T-cell (primary cell): ENCODE measurements at regions of chr2 and their contacts with region 1.

Region 1: DNA sequence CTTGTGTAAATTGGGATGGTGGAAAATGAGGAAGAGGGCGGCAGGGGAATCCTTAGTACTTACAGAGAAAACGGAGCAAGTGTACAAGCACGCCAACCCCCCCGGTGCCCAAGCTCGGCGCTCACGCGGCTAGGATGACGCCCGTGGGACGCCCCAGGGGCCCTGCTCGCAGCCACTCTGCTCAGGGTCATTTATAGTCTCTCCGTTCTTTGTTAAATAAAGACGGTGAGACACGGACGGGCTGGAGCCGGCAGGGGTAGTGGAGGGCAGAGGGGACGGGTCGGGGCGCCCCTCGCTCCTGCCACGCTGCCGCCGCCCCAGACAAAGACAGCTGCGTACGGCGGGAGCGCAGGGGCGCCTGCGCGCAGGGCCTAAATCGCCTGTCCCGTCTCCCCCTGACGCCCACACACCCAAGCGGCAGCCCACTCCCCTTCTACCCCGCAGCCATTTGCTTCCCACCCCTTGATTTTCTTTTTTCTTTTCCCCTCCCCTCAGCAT is 37.8 kb downstream of the PCBP1 start:
- DNase-seq: peak; percentile 40 to 78 (median 60)
- ATAC-seq: peak; percentile 63 to 69 (median 66)
- H3K4me3 ChIP-seq: peak overlapping the region; percentile 44 to 78
- H3K4me3 Mint-ChIP-seq: peak overlapping the region; percentile 90 to 98 (median 95)
- H3K27ac ChIP-seq: peak overlapping the region; percentile 98
- H3K27ac Mint-ChIP-seq: peak overlapping the region; percentile 100
- H3K4me1 ChIP-seq: peaks cover 38 to 67% of the 10 kb centered on the region in 2 experiments
- H3K4me1 Mint-ChIP-seq: peaks cover 71 to 84% (median 81%) of the 10 kb centered on the region in 3 donors
- H3K27me3 ChIP-seq: no peaks in the 10 kb centered on the region
- H3K27me3 Mint-ChIP-seq: no peaks in the 10 kb centered on the region

Region 2: DNA sequence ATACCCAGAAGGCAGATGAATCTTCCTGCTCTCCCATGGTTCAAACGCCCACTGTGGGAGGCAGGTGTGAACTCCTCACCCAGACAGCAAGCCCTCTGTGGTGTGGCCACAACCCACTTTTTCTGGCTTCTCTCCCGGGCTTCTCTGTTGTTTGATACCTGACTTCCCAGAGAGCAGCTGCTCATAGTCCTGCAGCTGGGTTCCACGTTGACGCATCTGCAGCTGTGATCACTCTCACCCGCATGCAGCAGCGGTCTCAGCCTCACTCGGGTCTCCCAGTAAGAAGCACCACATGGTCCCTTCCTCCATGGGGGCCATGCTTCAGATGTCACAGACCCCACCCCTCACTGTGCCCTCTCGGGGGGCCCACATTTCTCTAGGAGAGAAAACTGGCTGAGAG is 167.1 kb before region 1 on chr2:
- CTCF ChIA-PET with region 1: no interaction called
- POLR2A ChIA-PET with region 1: no interaction called
- DNase-seq: no peak
- ATAC-seq: no peak
- H3K4me3 ChIP-seq: no peak overlapping the region
- H3K4me3 Mint-ChIP-seq: no peak overlapping the region
- H3K27ac ChIP-seq: no peak overlapping the region
- H3K27ac Mint-ChIP-seq: no peak overlapping the region
- H3K4me1 ChIP-seq: peaks cover 0 to 5% of the 10 kb centered on the region in 2 experiments
- H3K4me1 Mint-ChIP-seq: peaks cover 0 to 5% (median 0%) of the 10 kb centered on the region in 3 donors
- H3K27me3 ChIP-seq: peaks cover 0 to 21% of the 10 kb centered on the region in 2 experiments
- H3K27me3 Mint-ChIP-seq: peaks cover 2 to 4% of the 10 kb centered on the region in 2 donors

Region 3: DNA sequence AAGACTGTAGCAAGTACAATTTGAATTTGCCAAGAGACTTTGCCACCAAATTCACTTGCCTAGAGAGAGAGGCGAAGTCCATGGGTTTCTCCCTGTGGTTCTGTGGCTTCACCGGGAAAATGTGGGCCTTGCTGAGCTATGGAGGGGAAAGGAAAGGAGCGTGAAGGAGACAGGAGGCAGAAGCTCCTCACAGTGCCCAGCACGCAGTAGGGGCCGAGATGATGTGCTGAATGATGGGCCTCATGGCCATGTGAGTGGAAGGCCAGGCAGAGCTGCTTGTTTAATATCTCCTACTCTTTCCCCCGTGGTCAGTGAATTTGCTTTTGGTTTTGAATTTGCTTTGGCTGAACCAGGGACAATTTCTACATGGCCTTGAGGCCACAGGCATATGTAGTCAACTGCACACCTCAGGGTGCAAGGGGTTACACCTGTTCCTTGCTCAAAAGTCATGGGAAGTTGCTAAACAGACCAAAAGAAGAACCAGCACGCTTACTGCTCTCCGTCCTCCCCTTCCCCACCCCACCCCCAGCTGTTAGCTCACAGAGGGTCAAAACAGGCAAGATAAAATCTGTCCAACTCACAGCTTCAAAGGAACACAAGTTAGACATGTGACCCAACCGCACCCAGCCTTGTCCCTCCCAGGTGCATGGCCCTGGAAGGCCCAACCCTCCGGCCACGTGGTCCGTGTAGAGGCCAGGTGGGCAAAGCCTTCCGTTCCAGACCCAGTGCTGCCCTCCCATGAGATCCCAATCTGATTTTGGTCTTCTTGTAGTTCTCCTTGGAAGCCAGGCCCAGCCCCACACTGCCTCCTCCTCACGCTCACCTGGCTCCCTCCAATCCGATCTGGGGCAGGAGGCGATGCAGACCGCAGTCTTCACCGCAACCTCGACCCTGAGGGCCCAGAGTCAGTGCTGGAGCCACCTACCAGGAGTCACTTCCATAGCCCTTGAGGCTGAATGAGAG is 149.3 kb before region 1 on chr2:
- CTCF ChIA-PET with region 1: no interaction called
- POLR2A ChIA-PET with region 1: no interaction called
- DNase-seq: peak in 4 of 35 experiments; percentile 10 to 40 (median 22)
- ATAC-seq: no peak
- H3K4me3 ChIP-seq: no peak overlapping the region
- H3K4me3 Mint-ChIP-seq: peak overlapping the region in 1 of 3 donors; percentile 27
- H3K27ac ChIP-seq: no peak overlapping the region
- H3K27ac Mint-ChIP-seq: no peak overlapping the region
- H3K4me1 ChIP-seq: peaks cover 0 to 9% of the 10 kb centered on the region in 2 experiments
- H3K4me1 Mint-ChIP-seq: peaks cover 13 to 20% (median 14%) of the 10 kb centered on the region in 3 donors
- H3K27me3 ChIP-seq: no peaks in the 10 kb centered on the region
- H3K27me3 Mint-ChIP-seq: no peaks in the 10 kb centered on the region

Region 4: GRCh38 chr2:70142590-70143313 is 17.7 kb after region 1 on chr2:
- CTCF ChIA-PET with region 1: interaction called in 1 of 2 experiments, 11 read pairs
- POLR2A ChIA-PET with region 1: interaction called, 3 to 7 read pairs
- DNase-seq: peak; percentile 98 to 100 (median 99)
- ATAC-seq: peak; percentile 79 to 83 (median 82)
- H3K4me3 ChIP-seq: peak overlapping the region; percentile 3 to 54
- H3K4me3 Mint-ChIP-seq: peak overlapping the region; percentile 82 to 88 (median 87)
- H3K27ac ChIP-seq: peak overlapping the region; percentile 97
- H3K27ac Mint-ChIP-seq: peak overlapping the region; percentile 97
- H3K4me1 ChIP-seq: peaks cover 31 to 52% of the 10 kb centered on the region in 2 experiments
- H3K4me1 Mint-ChIP-seq: peaks cover 55 to 73% (median 59%) of the 10 kb centered on the region in 3 donors
- H3K27me3 ChIP-seq: no peaks in the 10 kb centered on the region
- H3K27me3 Mint-ChIP-seq: no peaks in the 10 kb centered on the region